Calu3 (cell line): ENCODE measurements at regions of chr10 and their contacts with region 1.

Region 1: GRCh38 chr10:93916257-93917063 is 22.7 kb downstream of the SLC35G1 start:
- DNase-seq: no peak
- H3K4me3 Mint-ChIP-seq: no peak overlapping the region
- H3K27ac Mint-ChIP-seq: no peak overlapping the region
- H3K4me1 Mint-ChIP-seq: no peaks in the 10 kb centered on the region
- H3K27me3 Mint-ChIP-seq: no peaks in the 10 kb centered on the region
- CTCF ChIP-seq: peak; percentile 36

Region 2: GRCh38 chr10:93775356-93775755 is 141.1 kb before region 1 on chr10:
- CTCF ChIA-PET with region 1: no interaction called
- intact Hi-C with region 1: no loop called
- DNase-seq: no peak
- H3K4me3 Mint-ChIP-seq: no peak overlapping the region
- H3K27ac Mint-ChIP-seq: no peak overlapping the region
- H3K4me1 Mint-ChIP-seq: peaks cover 8% of the 10 kb centered on the region
- H3K27me3 Mint-ChIP-seq: peaks cover 65% of the 10 kb centered on the region
- CTCF ChIP-seq: no peak

Region 3: DNA sequence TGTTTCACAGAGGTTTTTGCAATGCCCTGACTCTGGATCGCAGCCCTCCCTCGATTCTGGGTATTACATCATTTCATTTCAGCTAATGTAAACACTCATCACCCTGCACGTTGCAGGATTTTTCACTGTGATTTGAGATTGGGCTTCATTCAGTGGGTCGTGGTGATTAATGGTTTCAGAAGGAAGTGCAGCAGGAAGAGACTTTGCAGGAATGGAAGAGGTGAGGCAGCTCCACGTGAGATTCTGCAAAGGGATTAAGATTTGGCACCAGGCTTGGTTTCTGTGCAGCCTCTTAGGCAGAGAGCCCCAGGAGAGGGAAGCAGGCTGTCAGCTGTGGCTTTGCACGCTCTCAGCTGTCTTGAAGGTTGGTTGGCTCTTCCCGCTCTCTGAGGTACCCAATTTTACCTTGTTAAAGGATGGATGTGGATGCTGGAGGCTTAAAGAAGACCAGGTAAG is 172.5 kb after region 1 on chr10:
- CTCF ChIA-PET with region 1: no interaction called
- intact Hi-C with region 1: no loop called
- DNase-seq: no peak
- H3K4me3 Mint-ChIP-seq: no peak overlapping the region
- H3K27ac Mint-ChIP-seq: no peak overlapping the region
- H3K4me1 Mint-ChIP-seq: no peaks in the 10 kb centered on the region
- H3K27me3 Mint-ChIP-seq: peaks cover 26% of the 10 kb centered on the region
- CTCF ChIP-seq: no peak

Region 4: DNA sequence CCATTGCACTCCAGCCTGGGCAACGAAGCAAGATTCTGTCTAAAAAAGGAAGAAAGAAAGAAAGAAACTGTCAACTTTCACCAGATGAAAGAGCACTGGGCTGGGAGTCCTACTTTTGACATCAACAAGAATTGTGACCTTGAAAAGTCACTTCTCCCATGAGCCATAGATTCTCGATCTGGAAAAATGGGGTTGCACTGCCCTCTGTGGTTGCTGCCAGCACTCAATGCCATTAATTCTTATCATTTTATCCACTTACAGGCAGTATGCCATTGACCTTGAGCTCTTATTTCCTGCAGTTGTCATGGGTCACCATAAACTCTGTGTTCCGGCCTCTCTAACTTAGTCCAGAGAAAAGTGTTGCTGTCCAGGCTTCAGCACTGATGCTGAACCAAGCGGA is 309.1 kb after region 1 on chr10:
- CTCF ChIA-PET with region 1: interaction called, 5 read pairs
- intact Hi-C with region 1: loop called (anchors 5 kb)
- DNase-seq: no peak
- H3K4me3 Mint-ChIP-seq: no peak overlapping the region
- H3K27ac Mint-ChIP-seq: no peak overlapping the region
- H3K4me1 Mint-ChIP-seq: no peaks in the 10 kb centered on the region
- H3K27me3 Mint-ChIP-seq: no peaks in the 10 kb centered on the region
- CTCF ChIP-seq: no peak

Region 5: GRCh38 chr10:94320285-94320914 is 403.9 kb after region 1 on chr10:
- CTCF ChIA-PET with region 1: interaction called, 38 read pairs
- intact Hi-C with region 1: loop called (anchors 1 kb)
- DNase-seq: peak; percentile 59
- H3K4me3 Mint-ChIP-seq: no peak overlapping the region
- H3K27ac Mint-ChIP-seq: no peak overlapping the region
- H3K4me1 Mint-ChIP-seq: no peaks in the 10 kb centered on the region
- H3K27me3 Mint-ChIP-seq: no peaks in the 10 kb centered on the region
- CTCF ChIP-seq: peak; percentile 52